HepG2 (cell line): ENCODE measurements at regions of chr9 and their contacts with region 1.

Region 1: DNA sequence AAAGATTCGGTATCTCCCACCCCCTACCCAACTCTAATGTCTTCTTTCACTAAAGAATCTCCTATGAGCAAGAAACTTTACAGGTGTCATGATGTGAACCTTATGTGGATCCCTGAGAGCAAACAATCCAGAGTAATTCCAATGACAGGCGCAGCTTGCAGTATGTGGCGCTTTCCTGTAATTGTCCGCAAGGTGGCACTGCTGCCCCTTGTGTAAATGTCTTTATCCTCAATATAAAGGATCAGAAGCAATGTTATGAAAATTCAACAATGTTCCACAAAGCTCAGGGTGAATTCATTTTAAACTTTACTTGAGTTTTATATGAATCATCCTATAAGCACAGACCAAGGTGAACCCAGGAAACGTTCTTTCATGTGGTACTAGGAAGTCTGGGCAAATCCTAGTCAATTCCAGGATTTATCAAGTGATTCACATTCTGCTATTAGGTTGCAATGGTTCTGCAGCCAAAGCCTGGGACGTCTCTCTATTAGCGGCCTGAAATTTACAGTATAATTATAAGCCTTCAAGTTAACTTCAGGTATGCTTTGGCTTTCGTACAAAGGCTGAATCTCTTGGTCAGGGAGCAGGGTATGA is 113.7 kb downstream of the TRPM6 start:
- DNase-seq: peak; percentile 63
- ATAC-seq: peak; percentile 70
- H3K4me3 ChIP-seq: no peak overlapping the region
- H3K27ac ChIP-seq: no peak overlapping the region
- H3K4me1 ChIP-seq: peaks cover 41% of the 10 kb centered on the region
- H3K27me3 ChIP-seq: no peaks in the 10 kb centered on the region
- CTCF ChIP-seq: peak; percentile 87
- EP300 ChIP-seq: no peak
- POLR2A ChIP-seq: no peak
- RAD21 ChIP-seq: peak; percentile 75

Region 2: DNA sequence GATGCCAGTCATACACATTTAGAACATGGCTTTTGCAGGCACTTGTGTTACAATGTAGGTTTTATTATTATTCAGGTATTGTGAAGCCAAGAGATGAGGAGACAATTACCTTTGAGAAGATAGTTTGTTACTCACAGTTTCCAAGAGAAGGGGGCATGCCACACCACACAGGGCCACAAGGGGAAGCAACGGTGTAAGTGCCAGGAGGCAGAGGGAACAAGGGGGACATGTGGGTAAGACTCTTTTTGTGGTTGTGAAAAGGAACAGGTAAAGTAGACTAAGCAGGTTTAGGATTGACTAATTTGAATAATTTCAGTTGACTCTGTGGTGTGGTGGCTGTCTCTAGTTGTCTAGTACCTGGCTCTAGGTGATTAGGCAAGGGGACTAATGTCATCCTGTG is 77.5 kb before region 1 on chr9:
- CTCF ChIA-PET with region 1: no interaction called
- POLR2A ChIA-PET with region 1: no interaction called
- in situ Hi-C with region 1: no loop called
- intact Hi-C with region 1: no loop called
- DNase-seq: no peak
- ATAC-seq: peak; percentile 65
- H3K4me3 ChIP-seq: no peak overlapping the region
- H3K27ac ChIP-seq: no peak overlapping the region
- H3K4me1 ChIP-seq: no peaks in the 10 kb centered on the region
- H3K27me3 ChIP-seq: no peaks in the 10 kb centered on the region
- CTCF ChIP-seq: no peak
- EP300 ChIP-seq: no peak
- POLR2A ChIP-seq: no peak
- RAD21 ChIP-seq: no peak

Region 3: DNA sequence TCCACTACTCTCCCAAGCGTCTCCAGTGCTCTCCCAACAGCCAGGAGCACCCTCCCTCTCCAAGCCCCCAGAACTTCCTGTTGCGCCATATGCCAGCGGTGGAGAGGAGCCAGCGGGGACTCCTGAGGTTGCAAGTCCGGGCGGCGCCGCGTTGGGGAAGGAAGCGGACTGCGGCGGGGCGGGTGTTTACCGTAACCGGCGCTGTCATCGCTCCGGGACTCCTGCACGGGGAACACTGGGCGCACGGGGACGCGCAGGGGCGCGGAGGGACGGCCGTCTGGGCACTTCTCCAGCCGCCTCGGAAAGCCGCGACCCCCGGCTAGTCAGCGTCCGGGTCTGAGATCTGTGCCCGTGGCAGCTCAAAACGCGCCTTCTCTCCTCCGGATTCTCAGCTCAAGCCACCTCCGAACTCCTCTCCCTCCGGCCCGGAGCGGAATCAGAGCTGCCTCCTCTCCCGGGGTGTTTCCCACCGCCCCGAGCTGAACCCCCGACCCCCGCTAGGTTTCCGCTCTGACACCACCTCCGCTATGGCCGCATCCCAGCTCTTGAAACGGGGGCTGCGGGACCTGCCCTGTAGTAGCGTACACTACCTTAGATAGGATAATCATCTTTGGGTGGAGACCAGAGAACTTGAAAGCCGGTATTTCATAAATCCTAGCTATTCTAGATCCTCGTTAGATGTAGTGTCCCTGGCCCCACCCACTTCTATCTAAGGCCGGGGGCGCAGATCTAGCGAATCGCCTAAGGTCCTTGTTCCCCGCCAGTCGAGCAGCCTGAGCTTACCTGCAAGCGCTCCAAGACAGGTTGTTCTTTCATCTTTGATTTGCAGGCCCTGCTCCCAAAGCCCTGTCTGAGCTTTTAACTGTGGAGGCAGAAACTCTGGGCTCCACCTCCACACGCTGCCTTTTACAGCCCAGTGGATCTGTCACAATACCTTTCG is 113.3 kb after region 1 on chr9 and contains the start of gene TRPM6:
- CTCF ChIA-PET with region 1: no interaction called
- POLR2A ChIA-PET with region 1: no interaction called
- in situ Hi-C with region 1: no loop called
- intact Hi-C with region 1: loop called (anchors 2 kb)
- DNase-seq: peak; percentile 66
- ATAC-seq: peak; percentile 95
- H3K4me3 ChIP-seq: peak within 1 kb of the TSS; percentile 49 to 78 (median 73)
- H3K27ac ChIP-seq: no peak within 1 kb of the TSS
- H3K4me1 ChIP-seq: peaks cover 15% of the 10 kb centered on the region
- H3K27me3 ChIP-seq: no peaks in the 10 kb centered on the region
- CTCF ChIP-seq: no peak
- EP300 ChIP-seq: no peak
- POLR2A ChIP-seq: no peak
- RAD21 ChIP-seq: peak; percentile 18; the same call in 1 of the 2 replicates
- total RNA-seq, gene TRPM6: 0.09 and 0.14 TPM in 2 replicates

Region 4: DNA sequence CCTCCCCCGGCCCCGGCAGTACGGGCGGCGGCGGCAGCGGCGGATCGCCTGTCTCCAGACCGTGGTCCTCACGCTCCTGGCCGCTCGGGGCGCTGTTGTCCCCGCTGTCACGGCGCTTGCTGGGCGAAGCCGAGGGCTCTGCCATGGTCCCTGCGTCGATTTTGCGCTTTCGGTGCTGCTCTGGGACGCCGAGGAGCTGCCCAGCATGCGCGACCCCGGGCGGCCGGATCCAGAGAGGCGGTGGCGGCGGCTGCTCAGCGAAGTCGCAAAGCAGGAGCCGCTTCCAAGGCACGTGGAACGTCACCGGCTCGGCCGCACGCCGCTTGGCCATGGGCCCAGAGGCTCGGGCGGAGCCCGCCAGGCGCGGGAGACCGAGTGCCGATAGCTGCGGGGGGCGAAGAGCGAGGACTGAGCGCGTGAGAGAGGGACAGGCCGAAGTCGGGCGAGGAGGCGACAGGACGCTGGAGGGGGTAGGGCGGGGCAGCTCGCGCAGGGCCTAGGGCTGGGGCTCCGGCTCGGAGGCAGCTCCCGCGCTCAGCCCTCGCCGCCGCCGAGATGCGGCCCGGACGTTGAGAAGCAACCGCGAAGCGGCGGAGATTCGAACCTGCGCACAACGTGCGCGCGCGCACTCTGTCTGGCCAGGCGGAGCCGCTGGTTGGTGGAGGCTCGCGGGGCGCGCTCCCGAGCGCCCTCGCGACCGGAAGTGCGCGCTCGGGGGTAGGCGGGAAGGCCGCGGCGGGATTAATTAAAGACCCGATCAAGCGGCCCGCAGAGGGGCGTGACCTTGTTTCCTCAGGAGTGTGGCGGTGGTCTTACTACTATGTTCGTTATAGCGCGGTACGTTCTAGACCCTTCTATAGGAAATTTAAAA is 178.5 kb after region 1 on chr9 and contains the start of gene C9orf40:
- CTCF ChIA-PET with region 1: no interaction called
- POLR2A ChIA-PET with region 1: no interaction called
- in situ Hi-C with region 1: loop called (anchors 10 kb)
- intact Hi-C with region 1: loop called (anchors 2 kb)
- DNase-seq: peak; percentile 70
- ATAC-seq: peak; percentile 96
- H3K4me3 ChIP-seq: peak within 1 kb of the TSS; percentile 89 to 97 (median 89)
- H3K27ac ChIP-seq: peak within 1 kb of the TSS; percentile 99
- H3K4me1 ChIP-seq: peaks cover 33% of the 10 kb centered on the region
- H3K27me3 ChIP-seq: no peaks in the 10 kb centered on the region; a peak in 1 of 5 replicates
- CTCF ChIP-seq: peak; percentile 91
- EP300 ChIP-seq: no peak
- POLR2A ChIP-seq: peak; percentile 42 to 67; a peak in 3 of 4 replicates
- RAD21 ChIP-seq: peak; percentile 63
- total RNA-seq, gene C9orf40: 13.5 and 16.5 TPM in 2 replicates

Region 5: GRCh38 chr9:75027187-75028107 is 253.5 kb after region 1 on chr9:
- CTCF ChIA-PET with region 1: no interaction called
- POLR2A ChIA-PET with region 1: interaction called, 6 read pairs
- in situ Hi-C with region 1: no loop called
- intact Hi-C with region 1: loop called (anchors 1 kb)
- DNase-seq: peak; percentile 30
- ATAC-seq: peak; percentile 83
- H3K4me3 ChIP-seq: peak overlapping the region; percentile 57 to 79 (median 69)
- H3K27ac ChIP-seq: peak overlapping the region; percentile 94
- H3K4me1 ChIP-seq: peaks cover 38% of the 10 kb centered on the region
- H3K27me3 ChIP-seq: no peaks in the 10 kb centered on the region; a peak in 1 of 5 replicates
- CTCF ChIP-seq: no peak
- EP300 ChIP-seq: no peak
- POLR2A ChIP-seq: no peak
- RAD21 ChIP-seq: no peak

Region 6: GRCh38 chr9:75185585-75186170 is 411.7 kb after region 1 on chr9:
- CTCF ChIA-PET with region 1: interaction called, 3 read pairs
- POLR2A ChIA-PET with region 1: no interaction called
- in situ Hi-C with region 1: no loop called
- intact Hi-C with region 1: loop called (anchors 1 kb)
- DNase-seq: peak; percentile 16
- ATAC-seq: peak; percentile 89
- H3K4me3 ChIP-seq: no peak overlapping the region
- H3K27ac ChIP-seq: no peak overlapping the region
- H3K4me1 ChIP-seq: no peaks in the 10 kb centered on the region
- H3K27me3 ChIP-seq: no peaks in the 10 kb centered on the region
- CTCF ChIP-seq: peak; percentile 61
- EP300 ChIP-seq: no peak
- POLR2A ChIP-seq: no peak
- RAD21 ChIP-seq: no peak